Mammary epithelial cell (primary cell): ENCODE measurements at regions of chr3 and their contacts with region 1.

Region 1: GRCh38 chr3:3603351-3603750 is 195.9 kb upstream of the LRRN1 start:
- DNase-seq: peak; percentile 21
- H3K4me3 ChIP-seq: no peak overlapping the region
- H3K27ac ChIP-seq: no peak overlapping the region
- H3K4me1 ChIP-seq: no peaks in the 10 kb centered on the region
- H3K27me3 ChIP-seq: no peaks in the 10 kb centered on the region
- CTCF ChIP-seq: no peak

Region 2: GRCh38 chr3:3531476-3531875 is 71.9 kb before region 1 on chr3:
- CTCF ChIA-PET with region 1: no interaction called
- dilution Hi-C with region 1: no loop called
- in situ Hi-C with region 1: no loop called
- intact Hi-C with region 1: no loop called
- DNase-seq: no peak
- H3K4me3 ChIP-seq: no peak overlapping the region
- H3K27ac ChIP-seq: no peak overlapping the region
- H3K4me1 ChIP-seq: no peaks in the 10 kb centered on the region
- H3K27me3 ChIP-seq: no peaks in the 10 kb centered on the region
- CTCF ChIP-seq: no peak

Region 3: DNA sequence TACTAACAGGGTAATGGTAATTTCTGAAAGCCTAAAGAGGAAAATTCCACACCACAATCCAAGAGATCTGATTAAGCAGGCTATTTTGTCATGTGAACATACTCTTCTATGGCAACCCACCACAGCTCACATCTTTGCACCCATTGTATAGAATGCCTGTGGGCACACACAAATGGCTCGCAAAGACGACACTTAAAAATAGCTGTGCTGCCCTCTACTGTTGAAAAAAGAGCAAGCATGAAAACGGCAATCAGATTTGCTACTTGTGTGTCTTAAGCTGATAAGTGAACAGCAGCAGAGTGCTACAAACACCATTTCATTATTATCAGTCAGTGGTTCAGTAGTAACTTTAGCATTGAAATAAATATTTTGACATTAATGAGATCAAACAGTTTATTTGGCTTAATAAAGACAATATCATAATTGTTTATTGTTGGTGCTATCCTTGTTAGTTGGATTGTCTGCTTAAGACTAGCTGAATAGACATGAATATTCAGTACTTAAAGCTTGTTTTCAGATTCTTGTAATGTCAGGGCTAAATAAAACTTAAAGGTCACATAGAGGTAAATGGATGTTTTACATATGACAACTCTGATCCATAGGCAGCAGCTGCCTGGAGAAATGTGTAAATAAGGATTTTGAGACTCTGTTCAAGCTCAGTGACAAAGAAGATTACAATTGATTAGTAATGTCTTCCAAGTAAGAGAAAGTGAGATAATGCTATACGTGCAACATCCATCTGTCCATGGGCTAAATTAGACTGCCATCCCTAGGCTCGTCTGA is 395.0 kb after region 1 on chr3:
- CTCF ChIA-PET with region 1: no interaction called
- dilution Hi-C with region 1: no loop called
- in situ Hi-C with region 1: no loop called
- intact Hi-C with region 1: loop called (anchors 5 kb)
- DNase-seq: peak; percentile 17
- H3K4me3 ChIP-seq: no peak overlapping the region
- H3K27ac ChIP-seq: no peak overlapping the region
- H3K4me1 ChIP-seq: no peaks in the 10 kb centered on the region
- H3K27me3 ChIP-seq: no peaks in the 10 kb centered on the region
- CTCF ChIP-seq: peak; percentile 33 to 62